ENCODE measurements at regions of chr1 and their contacts with region 1.

Region 1: DNA sequence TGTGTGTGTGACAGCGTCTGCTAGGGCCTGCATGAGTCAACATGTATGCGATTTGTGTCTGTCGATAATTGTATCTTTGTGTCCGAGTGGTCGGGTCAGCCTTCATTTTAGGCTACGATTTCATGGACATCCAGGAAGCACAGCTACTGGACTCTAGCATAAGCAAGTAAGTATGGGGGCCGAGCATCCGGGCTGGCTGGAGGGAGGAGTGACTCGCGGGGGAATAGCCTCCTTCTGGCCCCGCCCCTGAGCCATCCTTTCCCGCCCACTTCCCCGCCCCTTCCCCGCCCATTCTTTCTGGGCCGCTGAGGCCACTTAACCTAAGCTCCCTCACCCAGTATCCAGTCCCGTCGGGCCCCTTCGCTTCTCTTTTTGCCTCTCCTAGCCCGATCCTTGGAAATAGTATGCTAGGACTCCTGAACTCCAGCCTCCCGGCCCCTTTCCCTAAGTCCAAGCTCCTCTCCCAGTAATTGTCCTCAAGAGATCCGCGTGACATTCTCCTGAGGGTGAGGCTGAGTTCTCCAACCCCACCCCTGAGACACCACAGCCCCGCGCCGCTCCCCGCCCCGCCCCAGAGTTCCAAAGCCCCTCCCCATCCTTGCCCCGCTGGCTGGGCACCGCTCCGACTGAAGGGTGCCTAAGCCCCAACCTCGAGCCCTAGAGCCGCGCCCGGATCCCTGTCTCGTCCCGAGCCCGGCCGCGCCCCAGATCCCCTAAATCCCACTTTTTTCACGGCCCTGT is 1.2 kb downstream of the MAP3K6 start:
- DNase-seq: peak; percentile 88
- ATAC-seq: peak; percentile 74
- H3K4me3 Mint-ChIP-seq: peak overlapping the region; percentile 84
- H3K27ac Mint-ChIP-seq: peak overlapping the region; percentile 84
- H3K4me1 Mint-ChIP-seq: peaks cover 55% of the 10 kb centered on the region
- H3K27me3 Mint-ChIP-seq: no peaks in the 10 kb centered on the region

Region 2: DNA sequence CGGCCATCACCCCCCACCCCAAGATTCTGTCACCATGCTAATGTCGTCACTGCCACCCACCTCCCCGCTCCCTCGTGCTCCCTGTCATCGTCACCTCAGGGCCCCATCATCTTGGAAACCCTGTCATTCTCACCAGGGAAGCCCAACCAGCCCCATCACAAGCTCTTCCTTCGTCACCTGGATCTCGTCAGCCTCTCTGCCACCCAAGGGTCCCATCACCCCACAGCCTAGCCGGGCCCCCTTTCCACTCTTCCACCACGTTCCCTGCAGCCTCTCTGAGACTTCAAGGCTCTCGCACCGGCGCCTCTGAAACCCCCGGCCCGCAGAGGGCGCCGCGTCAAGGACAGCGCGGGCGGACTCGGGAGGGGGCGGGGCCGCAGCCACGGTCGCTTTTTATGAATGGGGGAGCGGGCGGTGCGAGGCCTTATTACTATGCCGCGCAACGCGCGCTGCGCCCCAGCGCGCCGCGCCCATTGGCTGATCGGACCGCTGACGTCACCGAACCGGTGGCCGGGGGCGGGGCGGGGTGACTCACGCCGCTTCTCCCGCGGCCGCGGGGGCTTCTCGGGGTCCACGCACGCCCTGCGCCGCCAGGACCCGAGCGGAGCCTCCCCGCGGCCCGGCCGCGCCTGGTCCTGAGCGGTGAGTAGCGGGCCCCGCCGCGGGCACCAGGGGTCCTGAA is 26.7 kb after region 1 on chr1 and contains the start of gene GPR3:
- CTCF ChIA-PET with region 1: interaction called, 60 read pairs
- POLR2A ChIA-PET with region 1: interaction called, 4 read pairs
- DNase-seq: peak; percentile 95
- ATAC-seq: peak; percentile 94
- H3K4me3 Mint-ChIP-seq: peak within 1 kb of the TSS; percentile 74
- H3K27ac Mint-ChIP-seq: peak within 1 kb of the TSS; percentile 82
- H3K4me1 Mint-ChIP-seq: peaks cover 25% of the 10 kb centered on the region
- H3K27me3 Mint-ChIP-seq: peaks cover 12% of the 10 kb centered on the region
- total RNA-seq, gene GPR3: 0.47 to 0.66 TPM

Region 3: GRCh38 chr1:27436204-27437159 is 70.9 kb after region 1 on chr1:
- CTCF ChIA-PET with region 1: no interaction called
- POLR2A ChIA-PET with region 1: no interaction called
- DNase-seq: peak; percentile 35
- ATAC-seq: peak; percentile 85
- H3K4me3 Mint-ChIP-seq: peak overlapping the region; percentile 49
- H3K27ac Mint-ChIP-seq: peak overlapping the region; percentile 62
- H3K4me1 Mint-ChIP-seq: peaks cover 55% of the 10 kb centered on the region
- H3K27me3 Mint-ChIP-seq: no peaks in the 10 kb centered on the region